ENCODE measurements at regions of chr9 and their contacts with region 1.

Region 1: GRCh38 chr9:90914868-90915483 is 113.4 kb downstream of the SYK start:
- DNase-seq: peak; percentile 56 to 75 (median 74)
- H3K4me3 ChIP-seq: no peak overlapping the region
- H3K4me3 Mint-ChIP-seq: no peak overlapping the region
- H3K27ac ChIP-seq: no peak overlapping the region
- H3K27ac Mint-ChIP-seq: peak overlapping the region in 1 of 7 donors; percentile 50
- H3K4me1 ChIP-seq: peaks cover 0 to 6% of the 10 kb centered on the region in 2 donors
- H3K4me1 Mint-ChIP-seq: peaks cover 6% of the 10 kb centered on the region
- H3K27me3 ChIP-seq: no peaks in the 10 kb centered on the region
- H3K27me3 Mint-ChIP-seq: no peaks in the 10 kb centered on the region
- CTCF ChIP-seq: peak; percentile 90

Region 2: DNA sequence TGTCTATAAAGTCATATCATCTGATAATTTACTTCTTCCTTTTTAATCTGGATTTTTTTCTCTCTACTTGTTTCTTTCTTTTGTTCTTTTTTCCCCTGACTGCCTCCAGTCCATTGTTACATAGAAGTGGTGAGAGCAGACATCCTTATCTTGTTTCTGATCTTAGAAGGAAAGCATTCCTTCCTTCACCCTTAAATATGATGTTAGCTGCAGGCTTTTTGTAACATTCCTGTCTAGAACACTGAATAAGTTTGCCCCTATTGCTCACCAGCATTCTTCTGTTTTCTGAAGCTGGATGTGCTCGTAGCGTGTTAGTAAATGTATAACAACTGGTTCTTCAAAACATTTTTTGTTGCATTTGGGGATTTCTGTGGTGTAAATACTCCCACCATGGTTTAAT is 645.3 kb after region 1 on chr9:
- intact Hi-C with region 1: no loop called
- DNase-seq: no peak
- H3K4me3 ChIP-seq: no peak overlapping the region
- H3K4me3 Mint-ChIP-seq: no peak overlapping the region
- H3K27ac ChIP-seq: no peak overlapping the region
- H3K27ac Mint-ChIP-seq: no peak overlapping the region
- H3K4me1 ChIP-seq: no peaks in the 10 kb centered on the region
- H3K4me1 Mint-ChIP-seq: no peaks in the 10 kb centered on the region
- H3K27me3 ChIP-seq: peaks cover 2 to 5% of the 10 kb centered on the region in 2 donors
- H3K27me3 Mint-ChIP-seq: peaks cover 4 to 15% (median 8%) of the 10 kb centered on the region in 3 donors
- CTCF ChIP-seq: no peak

Region 3: GRCh38 chr9:91727316-91727861 is 812.4 kb after region 1 on chr9:
- intact Hi-C with region 1: loop called (anchors 2 kb)
- DNase-seq: peak; percentile 10 to 28 (median 13)
- H3K4me3 ChIP-seq: no peak overlapping the region
- H3K4me3 Mint-ChIP-seq: no peak overlapping the region
- H3K27ac ChIP-seq: no peak overlapping the region
- H3K27ac Mint-ChIP-seq: peak overlapping the region in 1 of 7 donors; percentile 14
- H3K4me1 ChIP-seq: no peaks in the 10 kb centered on the region
- H3K4me1 Mint-ChIP-seq: no peaks in the 10 kb centered on the region
- H3K27me3 ChIP-seq: no peaks in the 10 kb centered on the region
- H3K27me3 Mint-ChIP-seq: peaks cover 1 to 5% (median 4%) of the 10 kb centered on the region in 3 donors
- CTCF ChIP-seq: peak; percentile 80